BJ (cell line): ENCODE measurements at regions of chr6 and their contacts with region 1.

Region 1: GRCh38 chr6:37051138-37052026 is 45.9 kb downstream of the FGD2 start:
- DNase-seq: no peak
- H3K4me3 ChIP-seq: no peak overlapping the region
- H3K27me3 ChIP-seq: peaks cover 2% of the 10 kb centered on the region
- CTCF ChIP-seq: peak; percentile 89

Region 2: GRCh38 chr6:36985808-36986703 is 65.3 kb before region 1 on chr6 and contains the start of gene MTCH1:
- CTCF ChIA-PET with region 1: no interaction called
- POLR2A ChIA-PET with region 1: no interaction called
- DNase-seq: peak; percentile 10
- H3K4me3 ChIP-seq: peak within 1 kb of the TSS; percentile 100
- H3K27me3 ChIP-seq: peaks cover 2% of the 10 kb centered on the region; the same call in 1 of the 2 replicates
- CTCF ChIP-seq: no peak
- polyA plus RNA-seq, gene MTCH1: 123 and 207 TPM in 2 replicates

Region 3: GRCh38 chr6:37038292-37039198 is 12.8 kb before region 1 on chr6:
- CTCF ChIA-PET with region 1: interaction called, 14 read pairs
- POLR2A ChIA-PET with region 1: no interaction called
- DNase-seq: no peak
- H3K4me3 ChIP-seq: no peak overlapping the region
- H3K27me3 ChIP-seq: peaks cover 3% of the 10 kb centered on the region; the same call in 1 of the 2 replicates
- CTCF ChIP-seq: no peak

Region 4: DNA sequence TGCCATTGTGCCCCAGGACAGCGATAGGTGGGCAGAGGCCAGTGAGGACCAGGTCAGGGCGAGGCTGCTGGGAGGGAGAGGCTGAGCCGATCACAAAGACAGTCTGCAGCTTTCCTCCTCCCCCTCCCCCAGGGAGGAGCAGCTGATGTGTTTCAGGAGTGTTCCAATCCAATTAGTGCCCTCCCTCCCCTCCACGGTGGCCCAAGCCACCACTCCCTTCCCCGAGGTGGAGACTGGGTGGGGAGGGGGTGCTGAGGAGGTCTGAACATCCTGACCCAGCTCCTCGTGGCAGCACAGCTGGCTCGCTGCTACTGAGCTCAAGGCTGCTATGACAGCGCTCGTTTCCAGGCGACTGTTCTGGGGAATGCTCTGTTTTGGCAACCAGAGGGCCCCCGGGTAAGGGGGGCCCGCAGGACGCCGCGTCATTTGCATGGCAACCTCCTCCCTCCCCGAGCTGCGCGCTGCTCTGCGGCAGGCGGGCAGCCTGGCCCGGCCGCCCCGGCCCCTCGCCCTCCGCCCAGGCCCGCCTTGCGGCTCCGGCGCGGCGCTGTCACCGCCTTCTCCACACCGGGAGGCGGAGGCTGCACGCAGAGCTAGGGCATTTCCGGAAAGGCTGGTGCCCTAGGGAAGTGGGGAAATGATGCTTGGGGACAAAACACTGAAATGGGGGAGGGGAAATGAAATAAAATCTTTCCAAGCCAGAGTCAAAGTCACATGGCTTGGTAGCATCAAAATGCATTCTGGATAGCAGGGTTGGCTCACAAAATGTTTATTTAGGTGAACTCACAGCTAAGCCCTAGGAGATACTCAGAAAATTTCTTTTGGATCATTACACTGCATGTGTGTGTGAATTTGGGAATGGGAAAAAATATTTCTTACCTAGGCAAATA is 51.1 kb after region 1 on chr6:
- CTCF ChIA-PET with region 1: interaction called, 14 read pairs
- POLR2A ChIA-PET with region 1: no interaction called
- DNase-seq: peak; percentile 78
- H3K4me3 ChIP-seq: peak overlapping the region; percentile 29
- H3K27me3 ChIP-seq: peaks cover 1% of the 10 kb centered on the region; the same call in 1 of the 2 replicates
- CTCF ChIP-seq: no peak

Region 5: DNA sequence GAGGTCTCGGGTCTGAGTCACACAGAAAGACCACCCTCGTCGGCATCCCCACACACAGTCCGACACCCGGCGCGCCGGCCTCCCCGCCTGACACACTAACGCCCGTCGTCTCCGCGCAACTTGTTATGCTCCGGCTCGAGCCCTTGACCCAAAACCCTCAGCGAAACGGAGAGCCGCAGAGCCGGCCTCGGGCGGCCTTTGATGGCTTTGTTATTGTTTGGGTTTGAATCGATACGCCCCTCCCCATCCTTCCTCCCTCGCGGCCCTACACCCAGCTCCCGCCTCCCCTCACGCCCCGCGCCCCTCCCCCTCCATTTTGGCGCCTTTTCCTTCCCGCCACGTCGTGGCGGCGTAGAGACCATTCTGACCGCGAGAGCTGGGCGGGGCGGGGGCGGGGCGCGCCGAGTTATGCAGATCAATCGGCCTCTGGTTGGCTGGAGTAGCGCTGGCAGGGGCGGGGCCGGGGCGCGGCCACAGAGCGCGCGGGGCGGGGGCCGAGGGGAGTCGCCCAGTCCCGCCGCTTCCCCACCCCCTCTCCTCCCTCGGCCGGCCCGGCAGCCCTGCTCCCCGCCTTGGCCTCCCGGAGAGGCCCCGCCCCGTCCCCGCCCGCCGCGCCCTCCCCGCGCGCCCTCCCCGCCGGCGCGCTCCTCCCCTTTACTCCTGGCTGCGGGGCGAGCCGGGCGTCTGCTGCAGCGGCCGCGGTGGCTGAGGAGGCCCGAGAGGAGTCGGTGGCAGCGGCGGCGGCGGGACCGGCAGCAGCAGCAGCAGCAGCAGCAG is 118.3 kb after region 1 on chr6 and contains the start of gene PIM1:
- CTCF ChIA-PET with region 1: interaction called, 243 read pairs
- POLR2A ChIA-PET with region 1: no interaction called
- DNase-seq: peak; percentile 69
- H3K4me3 ChIP-seq: peak within 1 kb of the TSS; percentile 86
- H3K27me3 ChIP-seq: no peaks in the 10 kb centered on the region
- CTCF ChIP-seq: no peak
- polyA plus RNA-seq, gene PIM1: 13.9 and 20.7 TPM in 2 replicates

Region 6: GRCh38 chr6:37190159-37190535 is 138.8 kb after region 1 on chr6:
- CTCF ChIA-PET with region 1: interaction called, 11 read pairs
- POLR2A ChIA-PET with region 1: no interaction called
- DNase-seq: no peak
- H3K4me3 ChIP-seq: no peak overlapping the region
- H3K27me3 ChIP-seq: no peaks in the 10 kb centered on the region; the same call in 1 of the 2 replicates
- CTCF ChIP-seq: no peak